Vagina (tissue), 2 donors: ENCODE measurements at regions of chr3 and their contacts with region 1.

Region 1: GRCh38 chr3:109059264-109059663 is 58.7 kb downstream of the MORC1 start:
- DNase-seq: no peak
- H3K4me3 ChIP-seq: no peak overlapping the region
- H3K27ac ChIP-seq: no peak overlapping the region
- H3K4me1 ChIP-seq: no peaks in the 10 kb centered on the region
- H3K27me3 ChIP-seq: no peaks in the 10 kb centered on the region
- CTCF ChIP-seq: no peak
- POLR2A ChIP-seq: no peak

Region 2: GRCh38 chr3:110821586-110821985 is 1762.3 kb after region 1 on chr3:
- intact Hi-C with region 1: loop called (anchors 5 kb)
- DNase-seq: no peak
- H3K4me3 ChIP-seq: no peak overlapping the region
- H3K27ac ChIP-seq: no peak overlapping the region
- H3K4me1 ChIP-seq: no peaks in the 10 kb centered on the region
- H3K27me3 ChIP-seq: no peaks in the 10 kb centered on the region
- CTCF ChIP-seq: no peak
- POLR2A ChIP-seq: no peak